Activated CD4-positive, alpha-beta T cell treated with anti-CD3 and anti-CD28 coated beads for 36 hours (primary cell): ENCODE measurements at regions of chr6 and their contacts with region 1.

Region 1: DNA sequence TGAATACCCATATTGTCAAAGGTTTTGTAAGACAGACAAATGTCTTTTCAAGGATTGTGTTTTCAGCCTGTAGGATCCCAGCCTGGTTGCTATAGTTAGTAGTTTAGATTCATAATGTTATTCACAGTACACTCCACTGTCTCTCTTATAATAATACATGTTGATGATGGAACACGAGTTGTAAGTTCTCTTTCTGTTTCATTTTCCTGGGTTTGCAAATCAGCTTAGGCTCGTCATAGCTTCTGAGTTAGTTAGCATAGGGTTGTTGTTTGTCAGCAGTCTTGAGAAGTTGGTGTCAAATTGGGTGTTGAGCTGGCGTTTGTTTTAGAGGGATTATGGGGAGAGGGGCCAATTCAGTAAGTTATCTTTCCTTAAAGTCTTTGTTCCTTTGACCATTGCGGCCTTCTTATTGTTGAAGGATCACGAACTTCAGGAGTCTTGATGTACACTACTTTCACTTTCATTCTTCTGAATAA is 45.8 kb downstream of the QKI start:
- DNase-seq: peak; percentile 23
- ATAC-seq: peak; percentile 90
- H3K4me3 Mint-ChIP-seq: peak overlapping the region; percentile 82
- H3K27ac Mint-ChIP-seq: peak overlapping the region; percentile 96
- H3K4me1 Mint-ChIP-seq: peaks cover 60% of the 10 kb centered on the region
- H3K27me3 Mint-ChIP-seq: no peaks in the 10 kb centered on the region

Region 2: DNA sequence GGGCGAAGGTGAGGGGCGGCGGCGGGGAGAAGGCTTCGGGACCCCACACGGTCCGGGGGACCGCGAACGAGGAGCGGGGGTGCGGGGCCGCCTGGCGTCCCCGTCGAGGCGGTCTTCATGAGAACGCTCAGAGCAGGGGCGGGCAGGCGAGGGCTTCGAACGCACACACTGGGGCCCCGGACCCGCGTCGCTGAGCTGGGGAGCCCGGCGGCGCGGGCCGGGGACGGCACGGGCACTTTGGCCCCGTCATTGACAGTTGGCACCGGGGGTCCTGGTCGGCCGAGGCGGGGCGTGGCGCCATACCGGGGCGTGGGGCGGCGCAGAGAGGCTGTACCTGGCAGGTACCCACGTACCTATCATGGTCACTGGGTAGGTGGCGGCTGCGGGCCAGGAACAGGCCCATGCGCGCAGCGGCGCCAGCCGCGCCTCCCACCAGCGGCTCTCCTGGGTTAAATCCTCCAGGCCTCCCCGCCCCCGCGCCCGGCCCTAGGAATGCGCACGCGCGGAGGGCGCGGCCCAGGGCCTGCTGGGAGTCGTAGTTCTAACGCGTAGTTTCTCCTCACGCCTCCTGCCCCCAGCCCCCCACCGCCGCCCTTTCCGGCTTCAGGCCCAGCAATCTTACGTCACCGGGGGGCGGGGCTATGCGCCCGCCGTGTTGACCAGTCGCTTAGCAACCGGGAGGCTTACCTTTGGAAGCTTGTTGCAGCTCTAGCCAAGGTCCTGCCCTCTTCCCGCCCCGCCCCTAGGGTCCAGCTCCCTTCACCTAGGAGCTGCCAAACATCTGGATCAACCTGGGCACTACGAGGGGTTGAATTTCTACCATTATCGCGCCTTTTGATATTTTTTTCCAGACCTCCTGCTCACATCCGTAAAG is 732.8 kb before region 1 on chr6 and contains the starts of genes PACRG and PRKN:
- CTCF ChIA-PET with region 1: no interaction called
- POLR2A ChIA-PET with region 1: no interaction called
- intact Hi-C with region 1: loop called in 1 of 2 experiments (anchors 5 kb)
- DNase-seq: peak; percentile 99
- ATAC-seq: peak; percentile 97
- H3K4me3 Mint-ChIP-seq: peak within 1 kb of the TSS; percentile 77
- H3K27ac Mint-ChIP-seq: peak within 1 kb of the TSS; percentile 84
- H3K4me1 Mint-ChIP-seq: peaks cover 11% of the 10 kb centered on the region
- H3K27me3 Mint-ChIP-seq: no peaks in the 10 kb centered on the region
- total RNA-seq, gene PACRG: not detected
- total RNA-seq, gene PRKN: 0.56 to 0.87 TPM

Region 3: DNA sequence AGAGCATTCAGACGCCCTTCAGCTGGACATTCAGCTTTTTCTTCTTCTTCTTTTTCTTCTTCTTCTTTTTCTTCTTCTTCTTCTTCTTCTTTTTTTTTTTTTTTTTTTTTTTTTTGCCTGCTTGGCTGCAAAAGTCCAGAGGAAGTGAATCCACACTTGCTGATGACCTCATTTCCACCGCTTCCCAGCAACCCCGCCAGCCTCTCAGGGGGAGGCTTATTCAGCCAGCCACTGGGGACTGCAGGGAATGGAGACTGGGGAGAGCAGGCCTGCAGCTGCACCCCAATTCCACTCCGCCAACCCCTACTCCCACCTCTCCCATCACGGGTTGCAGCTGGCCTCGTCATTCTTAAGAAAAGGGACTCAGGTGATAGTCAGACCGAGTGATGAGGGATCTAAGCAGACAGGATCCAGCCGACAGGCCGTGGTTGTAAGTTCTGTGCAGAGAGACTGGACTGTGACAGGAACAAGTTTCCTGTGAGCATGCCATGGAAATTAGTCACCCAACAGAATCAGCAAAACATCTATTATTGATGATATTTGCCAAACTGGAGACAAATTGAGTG is 104.8 kb before region 1 on chr6:
- CTCF ChIA-PET with region 1: no interaction called
- POLR2A ChIA-PET with region 1: no interaction called
- intact Hi-C with region 1: no loop called
- DNase-seq: no peak
- ATAC-seq: no peak
- H3K4me3 Mint-ChIP-seq: no peak overlapping the region
- H3K27ac Mint-ChIP-seq: no peak overlapping the region
- H3K4me1 Mint-ChIP-seq: no peaks in the 10 kb centered on the region
- H3K27me3 Mint-ChIP-seq: peaks cover 4% of the 10 kb centered on the region

Region 4: GRCh38 chr6:163438940-163439335 is 21.4 kb before region 1 on chr6:
- CTCF ChIA-PET with region 1: no interaction called
- POLR2A ChIA-PET with region 1: no interaction called
- intact Hi-C with region 1: no loop called
- DNase-seq: peak; percentile 41
- ATAC-seq: no peak
- H3K4me3 Mint-ChIP-seq: no peak overlapping the region
- H3K27ac Mint-ChIP-seq: no peak overlapping the region
- H3K4me1 Mint-ChIP-seq: peaks cover 62% of the 10 kb centered on the region
- H3K27me3 Mint-ChIP-seq: no peaks in the 10 kb centered on the region